ENCODE measurements at regions of chr11 and their contacts with region 1.

Region 1: DNA sequence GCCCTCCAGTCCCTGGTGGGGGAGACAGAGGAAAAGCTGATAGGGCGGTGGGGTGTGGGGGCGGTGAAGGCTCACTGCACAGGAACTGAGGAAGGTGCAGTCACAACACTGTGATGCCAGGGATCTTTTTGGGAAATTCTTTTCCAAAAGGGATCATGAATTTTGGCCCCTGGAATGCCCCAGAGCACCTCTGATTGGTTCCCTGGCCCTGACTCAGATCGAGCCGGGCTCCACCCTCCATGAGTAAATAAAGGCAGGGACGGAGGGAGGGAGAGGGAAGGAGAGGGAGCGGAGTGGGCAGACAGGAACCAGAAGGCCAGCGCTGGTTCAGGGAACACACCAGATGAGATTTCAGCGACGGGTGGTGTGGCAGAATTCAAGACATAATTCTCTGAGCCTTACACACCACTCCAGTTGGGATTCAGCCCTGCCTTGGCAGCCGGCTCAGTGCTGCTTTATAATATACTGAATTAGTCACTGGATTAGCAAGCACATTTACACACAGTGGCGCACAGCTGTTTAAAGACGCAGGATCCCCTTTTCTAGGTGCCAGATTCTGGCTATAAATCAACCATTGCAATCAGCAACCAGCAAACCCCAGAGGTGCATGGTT is 80.3 kb downstream of the ETS1 start:
- DNase-seq: peak; percentile 88
- ATAC-seq: peak; percentile 88 to 94

Region 2: DNA sequence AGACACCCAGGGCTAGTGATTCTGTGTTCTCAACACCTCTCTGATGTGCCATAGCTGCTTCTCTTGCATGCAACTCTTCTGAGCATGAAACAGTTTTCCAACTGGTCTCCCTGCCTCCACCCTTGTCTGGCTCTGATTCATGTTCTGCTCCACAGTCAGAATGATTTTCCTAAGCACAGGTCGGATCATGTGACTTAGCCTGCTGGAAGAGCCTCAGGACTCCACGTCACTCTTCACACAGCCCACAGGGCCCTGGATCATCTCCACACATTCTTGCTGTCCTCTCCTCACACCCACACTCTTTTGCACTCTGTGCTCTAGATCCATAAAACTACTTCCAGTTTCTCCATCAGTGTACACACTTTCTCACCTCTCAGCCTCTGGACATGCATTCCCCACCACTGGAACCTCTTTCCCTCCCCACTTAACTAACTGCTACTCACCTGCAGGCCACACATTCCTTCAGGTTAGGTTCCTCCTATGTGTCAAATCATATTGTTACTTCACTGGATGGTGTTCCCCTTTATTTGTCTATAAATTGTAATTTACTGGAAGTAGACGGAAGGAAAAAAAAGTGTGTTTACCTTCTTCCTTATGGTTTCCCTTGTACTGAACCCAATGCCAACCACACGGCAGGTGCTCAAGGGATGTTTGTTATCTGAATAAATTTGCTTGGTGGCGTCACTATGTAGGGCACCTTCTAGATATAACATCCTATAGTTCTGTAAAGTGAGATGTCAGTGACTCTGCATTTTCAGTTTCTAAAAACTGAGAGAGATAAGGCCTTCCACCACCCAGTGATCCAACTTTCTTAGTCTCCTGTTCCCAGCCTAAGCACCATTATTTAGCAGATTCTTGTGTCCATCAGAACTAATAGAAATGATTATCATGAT is 53.4 kb before region 1 on chr11:
- intact Hi-C with region 1: no loop called
- DNase-seq: peak; percentile 76
- ATAC-seq: peak; percentile 73 to 88

Region 3: GRCh38 chr11:128467610-128468041 is 39.5 kb before region 1 on chr11:
- intact Hi-C with region 1: loop called in 1 of 2 experiments (anchors 5 kb)
- DNase-seq: peak; percentile 49
- ATAC-seq: peak; percentile 12 to 69